Endothelial cell of umbilical vein (primary cell): ENCODE measurements at regions of chr1 and their contacts with region 1.

Region 1: DNA sequence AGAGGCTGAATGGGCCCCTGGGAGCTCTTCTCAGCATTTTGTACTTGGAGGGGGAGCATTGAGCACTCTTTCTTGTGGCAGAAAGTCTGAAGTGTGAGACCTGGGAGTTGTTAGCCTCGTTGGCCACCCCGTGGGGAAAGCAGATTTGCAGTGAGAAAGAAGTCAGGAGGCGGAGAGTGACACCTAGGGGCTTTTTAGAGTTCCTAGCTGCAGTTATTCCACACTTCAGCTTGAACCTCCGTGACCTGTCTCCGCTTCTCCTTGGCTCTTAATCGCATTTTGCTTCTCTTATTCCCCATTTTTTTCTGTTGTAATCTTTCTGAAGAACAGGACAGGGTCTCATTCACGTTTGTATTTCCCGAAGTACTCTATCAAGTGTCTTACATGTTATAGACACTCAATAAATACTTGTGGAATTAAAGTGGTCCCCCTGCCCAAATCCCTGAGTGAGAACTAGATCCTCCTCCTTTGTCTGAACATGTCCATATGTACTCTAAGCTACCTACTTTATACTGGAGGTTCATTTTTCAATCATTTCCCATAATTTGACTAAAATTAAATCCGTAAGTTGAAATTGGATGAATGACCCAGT is 14.5 kb upstream of the C1orf141 start:
- DNase-seq: peak; percentile 74
- H3K4me3 ChIP-seq: no peak overlapping the region
- H3K27ac ChIP-seq: no peak overlapping the region
- H3K4me1 ChIP-seq: no peaks in the 10 kb centered on the region
- H3K27me3 ChIP-seq: peaks cover 0 to 5% of the 10 kb centered on the region in 2 experiments
- CTCF ChIP-seq: peak; percentile 56 to 81
- POLR2A ChIP-seq: no peak

Region 2: GRCh38 chr1:66764994-66765578 is 384.2 kb before region 1 on chr1:
- CTCF ChIA-PET with region 1: interaction called, 122 read pairs
- POLR2A ChIA-PET with region 1: no interaction called
- dilution Hi-C with region 1: no loop called
- intact Hi-C with region 1: loop called (anchors 1 kb)
- DNase-seq: peak; percentile 79
- H3K4me3 ChIP-seq: no peak overlapping the region
- H3K27ac ChIP-seq: no peak overlapping the region
- H3K4me1 ChIP-seq: no peaks in the 10 kb centered on the region
- H3K27me3 ChIP-seq: no peaks in the 10 kb centered on the region
- CTCF ChIP-seq: peak; percentile 48 to 54
- POLR2A ChIP-seq: no peak

Region 3: GRCh38 chr1:66996018-66996682 is 153.1 kb before region 1 on chr1:
- CTCF ChIA-PET with region 1: interaction called, 316 read pairs
- POLR2A ChIA-PET with region 1: interaction called, 3 read pairs
- dilution Hi-C with region 1: no loop called
- intact Hi-C with region 1: loop called (anchors 1 kb)
- DNase-seq: peak; percentile 83
- H3K4me3 ChIP-seq: no peak overlapping the region
- H3K27ac ChIP-seq: no peak overlapping the region
- H3K4me1 ChIP-seq: no peaks in the 10 kb centered on the region
- H3K27me3 ChIP-seq: no peaks in the 10 kb centered on the region
- CTCF ChIP-seq: peak; percentile 74 to 75
- POLR2A ChIP-seq: no peak

Region 4: DNA sequence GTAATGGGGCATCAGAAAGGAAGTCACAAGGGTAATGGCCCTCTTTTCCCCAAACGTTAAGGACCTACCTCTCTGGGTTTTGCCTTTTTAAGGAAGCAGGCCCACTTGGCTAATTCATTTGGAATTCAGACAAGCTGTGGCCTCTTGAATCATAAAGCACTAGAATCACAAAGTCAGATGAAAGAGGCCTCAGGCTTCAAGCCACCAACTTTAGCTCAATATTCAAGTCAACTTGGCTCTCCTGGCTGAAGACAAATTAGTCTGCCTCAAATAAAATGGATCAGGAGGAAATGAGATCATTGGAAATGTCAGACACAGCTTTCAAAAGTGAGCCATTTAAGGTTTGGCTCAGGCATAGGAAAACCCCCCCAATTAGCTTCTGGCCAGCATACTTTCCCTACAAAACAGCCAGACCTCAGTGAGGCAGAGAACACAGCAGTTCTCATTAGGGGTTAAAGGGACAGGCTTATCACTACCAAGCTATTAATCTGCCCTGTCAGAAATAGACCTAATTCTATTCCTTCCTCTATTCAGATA is 129.6 kb before region 1 on chr1:
- CTCF ChIA-PET with region 1: interaction called, 21 read pairs
- POLR2A ChIA-PET with region 1: no interaction called
- dilution Hi-C with region 1: no loop called
- intact Hi-C with region 1: no loop called
- DNase-seq: peak; percentile 87
- H3K4me3 ChIP-seq: no peak overlapping the region
- H3K27ac ChIP-seq: peak overlapping the region; percentile 59
- H3K4me1 ChIP-seq: peaks cover 18% of the 10 kb centered on the region
- H3K27me3 ChIP-seq: no peaks in the 10 kb centered on the region
- CTCF ChIP-seq: no peak
- POLR2A ChIP-seq: no peak

Region 5: GRCh38 chr1:67126111-67126746 is 23.0 kb before region 1 on chr1:
- CTCF ChIA-PET with region 1: interaction called, 16 read pairs
- POLR2A ChIA-PET with region 1: no interaction called
- dilution Hi-C with region 1: no loop called
- intact Hi-C with region 1: no loop called
- DNase-seq: peak; percentile 6
- H3K4me3 ChIP-seq: no peak overlapping the region
- H3K27ac ChIP-seq: no peak overlapping the region
- H3K4me1 ChIP-seq: no peaks in the 10 kb centered on the region
- H3K27me3 ChIP-seq: no peaks in the 10 kb centered on the region
- CTCF ChIP-seq: no peak
- POLR2A ChIP-seq: no peak

Region 6: DNA sequence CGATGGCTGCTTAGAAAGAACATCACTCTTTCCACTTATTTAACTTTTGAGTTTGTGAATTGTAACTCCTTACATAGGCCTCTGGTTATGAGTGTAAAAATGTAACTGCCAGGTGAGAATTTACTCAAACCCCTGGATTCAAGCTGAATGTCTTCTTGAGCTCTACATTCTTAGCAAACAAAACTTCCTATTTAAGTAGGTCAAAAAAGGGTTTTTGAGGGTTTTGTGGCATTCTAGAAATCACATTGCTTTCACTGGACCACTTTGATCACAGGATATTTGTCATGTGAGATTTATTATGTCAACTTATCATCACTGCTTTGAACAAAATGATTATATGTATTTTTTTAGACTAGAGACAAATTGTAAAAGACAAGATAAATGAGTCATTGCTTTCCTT is 22.7 kb after region 1 on chr1:
- CTCF ChIA-PET with region 1: interaction called, 12 read pairs
- POLR2A ChIA-PET with region 1: no interaction called
- dilution Hi-C with region 1: no loop called
- intact Hi-C with region 1: no loop called
- DNase-seq: no peak
- H3K4me3 ChIP-seq: no peak overlapping the region
- H3K27ac ChIP-seq: no peak overlapping the region
- H3K4me1 ChIP-seq: no peaks in the 10 kb centered on the region
- H3K27me3 ChIP-seq: peaks cover 3 to 5% of the 10 kb centered on the region in 2 experiments
- CTCF ChIP-seq: no peak
- POLR2A ChIP-seq: no peak

Region 7: GRCh38 chr1:68516066-68516465 is 1366.8 kb after region 1 on chr1:
- CTCF ChIA-PET with region 1: no interaction called
- POLR2A ChIA-PET with region 1: no interaction called
- dilution Hi-C with region 1: no loop called
- intact Hi-C with region 1: no loop called
- DNase-seq: no peak
- H3K4me3 ChIP-seq: no peak overlapping the region
- H3K27ac ChIP-seq: no peak overlapping the region
- H3K4me1 ChIP-seq: no peaks in the 10 kb centered on the region
- H3K27me3 ChIP-seq: no peaks in the 10 kb centered on the region
- CTCF ChIP-seq: no peak
- POLR2A ChIP-seq: no peak